CD8-positive, alpha-beta T cell (primary cell): ENCODE measurements at regions of chr13 and their contacts with region 1.

Region 1: GRCh38 chr13:49606747-49607648 is 21.3 kb upstream of the ARL11 start:
- DNase-seq: peak; percentile 56 to 87 (median 78)
- ATAC-seq: peak; percentile 99
- H3K4me3 ChIP-seq: peak overlapping the region; percentile 29 to 40
- H3K4me3 Mint-ChIP-seq: peak overlapping the region; percentile 88
- H3K27ac ChIP-seq: no peak overlapping the region
- H3K27ac Mint-ChIP-seq: no peak overlapping the region
- H3K4me1 ChIP-seq: no peaks in the 10 kb centered on the region
- H3K4me1 Mint-ChIP-seq: peaks cover 2% of the 10 kb centered on the region
- H3K27me3 ChIP-seq: no peaks in the 10 kb centered on the region
- H3K27me3 Mint-ChIP-seq: no peaks in the 10 kb centered on the region
- CTCF ChIP-seq: peak; percentile 70

Region 2: DNA sequence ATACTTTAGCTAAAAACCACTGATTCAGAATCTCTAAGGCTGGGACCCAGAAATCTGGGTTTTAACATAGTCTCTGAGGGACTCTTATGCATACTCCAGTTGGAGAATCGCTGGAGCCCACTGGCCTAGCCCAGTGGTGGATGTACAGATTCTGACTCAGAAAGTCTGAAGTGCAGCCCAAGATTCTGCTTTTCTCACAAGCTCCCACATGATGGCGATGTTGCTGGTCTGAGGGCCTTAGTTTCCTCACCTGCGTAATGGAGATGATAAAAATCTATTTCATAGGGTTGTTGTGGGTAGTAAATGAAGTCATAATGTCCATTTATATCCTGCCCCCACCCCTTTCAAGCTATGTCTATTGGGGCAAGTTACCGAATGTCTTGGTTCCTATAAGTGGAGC is 367.0 kb before region 1 on chr13:
- CTCF ChIA-PET with region 1: interaction called, 8 read pairs
- POLR2A ChIA-PET with region 1: no interaction called
- intact Hi-C with region 1: loop called (anchors 5 kb)
- DNase-seq: peak in 6 of 9 experiments; percentile 16 to 65 (median 35)
- ATAC-seq: peak; percentile 74
- H3K4me3 ChIP-seq: no peak overlapping the region
- H3K4me3 Mint-ChIP-seq: no peak overlapping the region
- H3K27ac ChIP-seq: no peak overlapping the region
- H3K27ac Mint-ChIP-seq: no peak overlapping the region
- H3K4me1 ChIP-seq: no peaks in the 10 kb centered on the region
- H3K4me1 Mint-ChIP-seq: peaks cover 2% of the 10 kb centered on the region
- H3K27me3 ChIP-seq: no peaks in the 10 kb centered on the region
- H3K27me3 Mint-ChIP-seq: no peaks in the 10 kb centered on the region
- CTCF ChIP-seq: peak; percentile 43

Region 3: DNA sequence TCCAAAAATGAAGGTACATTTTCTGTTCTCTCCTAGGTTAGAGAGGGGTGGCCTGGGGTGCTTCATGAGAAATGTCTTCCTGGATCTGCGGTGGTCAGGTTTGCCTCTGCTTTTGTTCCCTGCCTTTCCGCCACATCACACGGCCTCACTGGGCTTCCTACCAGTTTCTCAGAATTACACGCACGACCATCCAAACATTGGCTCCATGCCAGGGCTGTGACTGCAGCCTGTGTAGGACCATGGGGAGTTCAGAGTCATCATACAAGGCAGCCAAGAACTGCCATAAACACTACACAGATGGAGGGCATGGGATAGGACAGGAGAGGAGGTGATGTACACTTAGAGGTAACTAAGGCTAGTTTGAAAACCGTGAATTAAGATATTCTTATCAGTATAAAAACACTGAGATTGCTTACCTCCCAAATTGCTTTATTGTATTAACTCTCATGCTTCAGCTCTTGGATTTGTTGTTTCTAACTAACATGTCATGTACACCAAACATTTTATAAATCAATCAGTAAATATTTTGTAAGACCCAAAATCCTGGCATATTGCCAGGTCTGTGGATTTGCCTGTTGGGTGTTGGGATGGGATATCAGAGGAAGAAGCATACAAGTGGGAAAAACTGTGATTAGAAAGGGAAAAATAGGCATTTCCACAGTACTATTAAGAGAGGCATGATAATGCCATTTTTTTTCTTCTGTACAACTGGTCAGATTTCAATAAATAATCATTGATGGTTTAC is 314.1 kb before region 1 on chr13:
- CTCF ChIA-PET with region 1: interaction called, 73 read pairs
- POLR2A ChIA-PET with region 1: interaction called, 4 read pairs
- intact Hi-C with region 1: no loop called
- DNase-seq: no peak
- ATAC-seq: no peak
- H3K4me3 ChIP-seq: no peak overlapping the region
- H3K4me3 Mint-ChIP-seq: no peak overlapping the region
- H3K27ac ChIP-seq: no peak overlapping the region
- H3K27ac Mint-ChIP-seq: peak overlapping the region; percentile 72
- H3K4me1 ChIP-seq: no peaks in the 10 kb centered on the region
- H3K4me1 Mint-ChIP-seq: peaks cover 9% of the 10 kb centered on the region
- H3K27me3 ChIP-seq: no peaks in the 10 kb centered on the region
- H3K27me3 Mint-ChIP-seq: no peaks in the 10 kb centered on the region
- CTCF ChIP-seq: no peak

Region 4: GRCh38 chr13:49421391-49421790 is 185.6 kb before region 1 on chr13:
- CTCF ChIA-PET with region 1: interaction called, 4 read pairs
- POLR2A ChIA-PET with region 1: no interaction called
- intact Hi-C with region 1: loop called (anchors 1 kb)
- DNase-seq: peak in 7 of 9 experiments; percentile 5 to 56 (median 26)
- ATAC-seq: peak; percentile 59
- H3K4me3 ChIP-seq: no peak overlapping the region
- H3K4me3 Mint-ChIP-seq: no peak overlapping the region
- H3K27ac ChIP-seq: no peak overlapping the region
- H3K27ac Mint-ChIP-seq: no peak overlapping the region
- H3K4me1 ChIP-seq: no peaks in the 10 kb centered on the region
- H3K4me1 Mint-ChIP-seq: no peaks in the 10 kb centered on the region
- H3K27me3 ChIP-seq: no peaks in the 10 kb centered on the region
- H3K27me3 Mint-ChIP-seq: no peaks in the 10 kb centered on the region
- CTCF ChIP-seq: no peak

Region 5: DNA sequence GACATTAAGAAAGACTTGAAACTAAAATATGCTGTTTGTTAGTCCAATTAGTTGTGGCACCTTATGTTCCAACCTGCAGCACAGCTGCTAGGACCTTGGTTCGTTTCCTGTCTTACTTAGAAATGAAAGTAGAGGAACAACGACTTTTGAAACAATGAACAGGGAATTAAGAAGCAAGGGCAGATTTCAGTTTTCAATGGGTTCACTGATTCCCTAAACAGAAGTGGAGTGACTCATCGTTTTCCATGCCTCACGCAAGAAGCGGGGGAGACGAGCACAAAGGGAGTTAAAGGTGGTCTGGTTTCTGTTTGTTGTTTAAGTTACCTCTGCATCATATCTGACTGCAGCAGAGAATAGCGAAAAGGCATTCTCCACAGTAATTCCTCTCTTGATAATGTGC is 66.4 kb before region 1 on chr13:
- CTCF ChIA-PET with region 1: interaction called, 3 read pairs
- POLR2A ChIA-PET with region 1: no interaction called
- intact Hi-C with region 1: loop called in 1 of 2 experiments (anchors 5 kb)
- DNase-seq: peak in 3 of 9 experiments; percentile 3 to 48 (median 16)
- ATAC-seq: peak; percentile 42
- H3K4me3 ChIP-seq: peak overlapping the region; percentile 10 to 23
- H3K4me3 Mint-ChIP-seq: peak overlapping the region; percentile 79
- H3K27ac ChIP-seq: peak overlapping the region in 1 of 2 experiments; percentile 46
- H3K27ac Mint-ChIP-seq: peak overlapping the region; percentile 89
- H3K4me1 ChIP-seq: peaks cover 15% of the 10 kb centered on the region
- H3K4me1 Mint-ChIP-seq: peaks cover 18% of the 10 kb centered on the region
- H3K27me3 ChIP-seq: no peaks in the 10 kb centered on the region
- H3K27me3 Mint-ChIP-seq: no peaks in the 10 kb centered on the region
- CTCF ChIP-seq: no peak

Region 6: GRCh38 chr13:49585220-49586157 is 21.5 kb before region 1 on chr13 and contains the start of gene RCBTB1:
- CTCF ChIA-PET with region 1: interaction called, 10 read pairs
- POLR2A ChIA-PET with region 1: no interaction called
- intact Hi-C with region 1: loop called in 1 of 2 experiments (anchors 1 kb)
- DNase-seq: peak; percentile 33 to 88 (median 68)
- ATAC-seq: peak; percentile 88
- H3K4me3 ChIP-seq: peak within 1 kb of the TSS; percentile 89 to 97
- H3K4me3 Mint-ChIP-seq: peak within 1 kb of the TSS; percentile 90
- H3K27ac ChIP-seq: peak within 1 kb of the TSS; percentile 71 to 86
- H3K27ac Mint-ChIP-seq: peak within 1 kb of the TSS; percentile 92
- H3K4me1 ChIP-seq: peaks cover 9% of the 10 kb centered on the region
- H3K4me1 Mint-ChIP-seq: peaks cover 36% of the 10 kb centered on the region
- H3K27me3 ChIP-seq: no peaks in the 10 kb centered on the region
- H3K27me3 Mint-ChIP-seq: no peaks in the 10 kb centered on the region
- CTCF ChIP-seq: no peak
- total RNA-seq, gene RCBTB1: 12.1 to 14.2 TPM